ENCODE measurements at regions of chr6 and their contacts with region 1.

Region 1: DNA sequence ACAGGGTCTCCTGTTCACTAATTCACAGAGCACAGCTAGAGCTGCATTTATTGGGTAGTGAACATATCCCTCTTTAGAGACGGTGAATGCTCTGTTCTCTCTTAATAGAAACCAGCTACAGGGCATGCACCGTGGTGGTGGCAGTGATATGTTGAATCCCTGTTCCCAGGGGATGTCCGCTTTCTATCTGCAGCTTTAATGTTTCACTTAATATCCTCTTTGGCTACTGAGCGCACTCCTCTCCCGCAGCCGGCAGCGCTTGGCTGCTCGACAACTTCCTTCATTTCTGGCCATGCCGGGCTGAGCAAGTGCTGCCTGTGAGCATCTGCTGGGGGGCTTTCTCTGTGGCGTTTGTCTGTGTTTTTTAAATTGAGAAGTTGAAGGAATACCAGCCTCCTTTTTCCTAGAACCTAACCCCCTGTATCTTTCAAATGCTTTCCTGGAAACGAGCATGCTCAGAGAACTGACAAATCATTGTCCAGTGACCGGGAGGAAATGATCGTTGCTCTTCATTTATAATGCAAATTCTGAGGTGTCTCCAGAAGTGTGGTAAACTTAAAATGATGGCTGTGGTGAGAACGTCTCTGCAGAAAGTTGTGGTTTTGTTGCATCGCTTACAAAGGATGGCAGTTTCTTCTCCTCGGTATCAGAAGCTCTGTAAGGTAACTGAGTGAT is 297.9 kb downstream of the UTRN start:
- DNase-seq: peak; percentile 15 to 74 (median 36)
- ATAC-seq: peak; percentile 35 to 73 (median 72)
- H3K4me3 ChIP-seq: peak overlapping the region in 6 of 12 donors; percentile 2 to 43 (median 14)
- H3K27ac ChIP-seq: no peak overlapping the region
- H3K4me1 ChIP-seq: peaks cover 0 to 35% (median 21%) of the 10 kb centered on the region in 12 donors
- H3K27me3 ChIP-seq: no peaks in the 10 kb centered on the region
- CTCF ChIP-seq: no peak
- POLR2A ChIP-seq: no peak

Region 2: DNA sequence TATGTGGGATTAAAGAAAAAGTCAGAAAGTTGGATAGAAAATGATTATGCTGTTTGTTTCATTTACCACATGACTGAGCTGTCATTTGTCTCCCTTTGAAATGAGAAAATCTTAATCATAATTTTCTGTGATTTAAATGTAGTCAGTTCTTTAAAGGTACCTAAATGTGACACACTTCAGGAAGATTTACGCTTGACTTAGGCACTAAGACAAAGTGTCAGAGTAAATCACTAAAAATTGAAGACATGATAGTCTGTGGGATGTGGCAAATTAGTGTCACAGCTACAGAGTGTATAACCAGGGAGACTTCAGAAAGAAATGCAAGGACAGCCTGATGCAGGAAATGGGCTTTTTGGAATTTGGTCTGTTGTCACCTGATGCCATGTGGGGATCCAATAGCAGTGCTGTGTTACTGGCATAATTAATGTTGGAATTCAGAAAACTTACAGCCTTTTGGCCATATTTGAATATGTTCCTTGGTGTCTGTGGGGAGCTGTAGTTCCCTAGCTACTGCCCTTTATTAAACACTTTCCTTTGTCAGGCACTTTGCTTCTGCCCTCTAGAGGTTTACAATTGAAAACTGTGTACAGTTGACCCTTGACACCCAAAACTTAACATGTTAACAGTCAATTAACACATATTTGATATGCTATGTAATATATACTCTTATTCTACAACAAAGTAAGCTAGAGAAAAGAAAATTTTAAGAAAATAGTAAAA is 195.9 kb after region 1 on chr6:
- intact Hi-C with region 1: loop called in 3 of 10 experiments (anchors 10 kb)
- DNase-seq: no peak
- ATAC-seq: no peak
- H3K4me3 ChIP-seq: no peak overlapping the region
- H3K27ac ChIP-seq: no peak overlapping the region
- H3K4me1 ChIP-seq: peaks cover 0 to 6% (median 0%) of the 10 kb centered on the region in 12 donors
- H3K27me3 ChIP-seq: no peaks in the 10 kb centered on the region
- CTCF ChIP-seq: peak in 3 of 12 donors; percentile 7 to 22 (median 8)
- POLR2A ChIP-seq: no peak

Region 3: GRCh38 chr6:145028144-145028818 is 445.2 kb after region 1 on chr6:
- intact Hi-C with region 1: loop called in 8 of 10 experiments (anchors 5 to 10 kb)
- DNase-seq: no peak
- ATAC-seq: peak in 1 of 4 donors; percentile 67
- H3K4me3 ChIP-seq: no peak overlapping the region
- H3K27ac ChIP-seq: no peak overlapping the region
- H3K4me1 ChIP-seq: peaks cover 0 to 6% (median 0%) of the 10 kb centered on the region in 12 donors
- H3K27me3 ChIP-seq: no peaks in the 10 kb centered on the region
- CTCF ChIP-seq: peak in 11 of 12 donors; percentile 14 to 60 (median 43)
- POLR2A ChIP-seq: no peak

Region 4: GRCh38 chr6:145137426-145137825 is 554.4 kb after region 1 on chr6:
- intact Hi-C with region 1: loop called in 1 of 10 experiments (anchors 10 kb)
- DNase-seq: no peak
- ATAC-seq: no peak
- H3K4me3 ChIP-seq: no peak overlapping the region
- H3K27ac ChIP-seq: no peak overlapping the region
- H3K4me1 ChIP-seq: no peaks in the 10 kb centered on the region
- H3K27me3 ChIP-seq: no peaks in the 10 kb centered on the region
- CTCF ChIP-seq: peak in 4 of 12 donors; percentile 16 to 32 (median 24)
- POLR2A ChIP-seq: no peak

Region 5: GRCh38 chr6:145633981-145634627 is 1051.0 kb after region 1 on chr6:
- intact Hi-C with region 1: loop called in 7 of 10 experiments (anchors 5 to 10 kb)
- DNase-seq: peak; percentile 77 to 87 (median 84)
- ATAC-seq: peak; percentile 86 to 93 (median 90)
- H3K4me3 ChIP-seq: no peak overlapping the region
- H3K27ac ChIP-seq: no peak overlapping the region
- H3K4me1 ChIP-seq: peaks cover 0 to 23% (median 4%) of the 10 kb centered on the region in 12 donors
- H3K27me3 ChIP-seq: no peaks in the 10 kb centered on the region
- CTCF ChIP-seq: peak; percentile 78 to 93 (median 84)
- POLR2A ChIP-seq: no peak

Measured in heart left ventricle (tissue), 16 donors.